ENCODE measurements at regions of chr12 and their contacts with region 1.

Region 1: GRCh38 chr12:6470375-6471163 is at the start of gene VAMP1:
- DNase-seq: peak; percentile 98
- ATAC-seq: peak; percentile 95 to 96
- H3K4me3 ChIP-seq: peak within 1 kb of the TSS; percentile 68
- H3K27ac ChIP-seq: peak within 1 kb of the TSS; percentile 81 to 90
- H3K4me1 ChIP-seq: peaks cover 38% of the 10 kb centered on the region
- CTCF ChIP-seq: no peak
- EP300 ChIP-seq: no peak
- POLR2A ChIP-seq: peak; percentile 100
- RAD21 ChIP-seq: no peak
- polyA plus RNA-seq, gene VAMP1: 17.6 and 28.8 TPM in 2 replicates

Region 2: GRCh38 chr12:5973461-5974130 is 497.0 kb before region 1 on chr12:
- CTCF ChIA-PET with region 1: no interaction called
- POLR2A ChIA-PET with region 1: no interaction called
- DNase-seq: no peak
- ATAC-seq: no peak
- H3K4me3 ChIP-seq: no peak overlapping the region
- H3K27ac ChIP-seq: no peak overlapping the region
- H3K4me1 ChIP-seq: no peaks in the 10 kb centered on the region
- CTCF ChIP-seq: no peak
- EP300 ChIP-seq: no peak
- POLR2A ChIP-seq: no peak
- RAD21 ChIP-seq: no peak

Region 3: GRCh38 chr12:6323340-6323994 is 147.1 kb before region 1 on chr12:
- CTCF ChIA-PET with region 1: interaction called, 73 read pairs
- POLR2A ChIA-PET with region 1: interaction called, 15 read pairs
- DNase-seq: peak; percentile 88 to 92
- ATAC-seq: peak; percentile 56 to 67
- H3K4me3 ChIP-seq: peak overlapping the region; percentile 11; the same call in 1 of the 3 replicates
- H3K27ac ChIP-seq: peak overlapping the region; percentile 81 to 95
- H3K4me1 ChIP-seq: peaks cover 93% of the 10 kb centered on the region
- CTCF ChIP-seq: peak; percentile 72
- EP300 ChIP-seq: no peak
- POLR2A ChIP-seq: no peak
- RAD21 ChIP-seq: peak; percentile 61 to 75; a peak in 4 of 5 replicates

Region 4: GRCh38 chr12:6367065-6367968 is 103.3 kb before region 1 on chr12:
- CTCF ChIA-PET with region 1: interaction called, 9 read pairs
- POLR2A ChIA-PET with region 1: interaction called, 17 read pairs
- DNase-seq: peak in 1 of 2 experiments; percentile 77
- ATAC-seq: no peak
- H3K4me3 ChIP-seq: no peak overlapping the region
- H3K27ac ChIP-seq: peak overlapping the region; percentile 97 to 99
- H3K4me1 ChIP-seq: peaks cover 64% of the 10 kb centered on the region
- CTCF ChIP-seq: no peak; the same call in 1 of the 3 replicates
- EP300 ChIP-seq: no peak
- POLR2A ChIP-seq: no peak
- RAD21 ChIP-seq: peak; percentile 48 to 57; a peak in 4 of 5 replicates

Region 5: DNA sequence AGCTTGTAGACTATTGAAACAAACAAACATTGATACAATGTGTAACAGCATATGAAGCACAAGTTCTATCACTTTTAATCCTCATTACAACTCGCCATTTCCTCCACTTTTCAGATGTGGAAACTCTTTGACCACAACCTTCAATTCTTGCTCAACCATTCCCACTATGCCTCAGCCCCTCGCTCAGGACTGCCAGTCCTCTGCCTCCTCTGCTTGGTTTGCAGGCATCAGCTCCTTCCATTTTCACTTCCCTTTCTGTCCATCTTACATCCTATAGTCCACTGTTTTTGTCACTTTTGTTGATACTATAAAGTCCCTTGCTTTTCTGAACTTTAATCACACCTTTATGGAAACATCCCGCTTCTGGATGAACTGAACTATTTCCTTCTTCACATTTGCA is 54.0 kb before region 1 on chr12:
- CTCF ChIA-PET with region 1: interaction called, 121 read pairs
- POLR2A ChIA-PET with region 1: interaction called, 3 read pairs
- DNase-seq: no peak
- ATAC-seq: no peak
- H3K4me3 ChIP-seq: no peak overlapping the region
- H3K27ac ChIP-seq: no peak overlapping the region
- H3K4me1 ChIP-seq: peaks cover 17% of the 10 kb centered on the region
- CTCF ChIP-seq: no peak
- EP300 ChIP-seq: no peak
- POLR2A ChIP-seq: no peak
- RAD21 ChIP-seq: no peak

Region 6: DNA sequence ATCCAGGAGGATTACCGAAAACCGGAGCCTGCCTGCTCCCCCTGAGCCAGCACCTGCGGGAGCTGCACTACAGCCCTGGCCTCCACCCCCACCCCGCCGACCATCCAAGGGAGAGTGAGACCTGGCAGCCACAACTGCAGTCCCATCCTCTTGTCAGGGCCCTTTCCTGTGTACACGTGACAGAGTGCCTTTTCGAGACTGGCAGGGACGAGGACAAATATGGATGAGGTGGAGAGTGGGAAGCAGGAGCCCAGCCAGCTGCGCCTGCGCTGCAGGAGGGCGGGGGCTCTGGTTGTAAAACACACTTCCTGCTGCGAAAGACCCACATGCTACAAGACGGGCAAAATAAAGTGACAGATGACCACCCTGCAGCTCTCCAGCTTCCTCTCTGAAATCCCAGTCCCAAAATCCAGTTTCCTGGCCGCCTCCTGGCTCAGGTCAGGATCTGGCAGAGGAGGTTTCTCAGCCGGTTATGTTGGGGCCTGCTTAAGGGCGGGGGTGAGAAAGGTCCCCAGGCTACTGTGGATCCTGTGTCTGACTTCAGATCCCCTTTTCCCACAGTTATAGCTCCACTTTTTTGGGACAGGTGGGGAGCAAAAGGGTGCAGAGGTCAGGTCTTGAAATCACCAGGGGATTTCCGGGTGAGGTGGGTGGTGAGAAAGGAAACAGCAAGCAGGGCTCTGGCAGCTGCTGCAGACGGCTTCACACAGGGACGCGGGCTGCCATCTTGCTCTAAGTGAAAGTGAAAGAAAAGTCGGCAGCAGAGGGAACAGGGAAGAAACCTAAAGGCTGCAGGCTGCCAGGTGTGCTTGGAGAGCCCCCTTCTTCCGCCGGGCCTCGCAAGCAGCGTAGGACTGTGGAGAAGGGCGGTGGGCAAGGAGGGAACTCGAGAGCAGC is 19.0 kb before region 1 on chr12 and contains the start of gene TAPBPL:
- CTCF ChIA-PET with region 1: interaction called, 52 read pairs
- POLR2A ChIA-PET with region 1: interaction called, 14 read pairs
- DNase-seq: peak; percentile 47 to 62
- ATAC-seq: peak; percentile 75 to 78
- H3K4me3 ChIP-seq: peak within 1 kb of the TSS; percentile 39
- H3K27ac ChIP-seq: peak within 1 kb of the TSS; percentile 97
- H3K4me1 ChIP-seq: peaks cover 21% of the 10 kb centered on the region
- CTCF ChIP-seq: no peak
- EP300 ChIP-seq: no peak
- POLR2A ChIP-seq: peak; percentile 22; the same call in 1 of the 2 replicates
- RAD21 ChIP-seq: no peak
- polyA plus RNA-seq, gene TAPBPL: 3.6 and 5.1 TPM in 2 replicates

Region 7: GRCh38 chr12:6540181-6540877 is 69.8 kb after region 1 on chr12:
- CTCF ChIA-PET with region 1: interaction called, 47 read pairs
- POLR2A ChIA-PET with region 1: interaction called, 28 read pairs
- DNase-seq: peak; percentile 87 to 91
- ATAC-seq: peak; percentile 58 to 69
- H3K4me3 ChIP-seq: peak overlapping the region; percentile 34
- H3K27ac ChIP-seq: peak overlapping the region; percentile 70 to 81
- H3K4me1 ChIP-seq: peaks cover 57% of the 10 kb centered on the region
- CTCF ChIP-seq: no peak
- EP300 ChIP-seq: no peak
- POLR2A ChIP-seq: no peak
- RAD21 ChIP-seq: no peak

Region 8: DNA sequence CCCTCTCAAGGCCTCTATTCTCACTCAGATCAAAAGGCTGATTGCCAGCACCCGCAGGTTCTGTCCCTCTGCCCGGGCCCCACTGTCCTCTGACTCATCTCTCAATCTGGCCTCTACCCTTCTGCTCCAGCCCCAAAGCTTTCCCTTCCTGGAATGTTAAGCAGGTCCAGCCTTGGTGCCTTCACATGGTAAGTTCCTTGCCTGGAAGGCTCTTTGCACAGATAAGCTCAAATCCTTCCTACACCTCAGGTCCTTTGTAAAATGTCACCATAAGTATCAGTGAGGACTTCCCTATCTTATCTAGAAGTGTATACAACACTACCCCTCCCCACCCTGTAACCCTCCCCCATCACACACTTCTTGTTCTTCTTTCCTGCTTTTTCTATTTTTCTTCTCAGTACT is 525.5 kb after region 1 on chr12:
- CTCF ChIA-PET with region 1: no interaction called
- POLR2A ChIA-PET with region 1: no interaction called
- DNase-seq: no peak
- ATAC-seq: peak; percentile 62 to 70; a peak in 4 of 6 replicates
- H3K4me3 ChIP-seq: no peak overlapping the region
- H3K27ac ChIP-seq: no peak overlapping the region
- H3K4me1 ChIP-seq: peaks cover 13% of the 10 kb centered on the region
- CTCF ChIP-seq: no peak
- EP300 ChIP-seq: no peak
- POLR2A ChIP-seq: no peak
- RAD21 ChIP-seq: no peak

Measured in A549 (cell line).